ENCODE measurements at regions of chr17 and their contacts with region 1.

Region 1: DNA sequence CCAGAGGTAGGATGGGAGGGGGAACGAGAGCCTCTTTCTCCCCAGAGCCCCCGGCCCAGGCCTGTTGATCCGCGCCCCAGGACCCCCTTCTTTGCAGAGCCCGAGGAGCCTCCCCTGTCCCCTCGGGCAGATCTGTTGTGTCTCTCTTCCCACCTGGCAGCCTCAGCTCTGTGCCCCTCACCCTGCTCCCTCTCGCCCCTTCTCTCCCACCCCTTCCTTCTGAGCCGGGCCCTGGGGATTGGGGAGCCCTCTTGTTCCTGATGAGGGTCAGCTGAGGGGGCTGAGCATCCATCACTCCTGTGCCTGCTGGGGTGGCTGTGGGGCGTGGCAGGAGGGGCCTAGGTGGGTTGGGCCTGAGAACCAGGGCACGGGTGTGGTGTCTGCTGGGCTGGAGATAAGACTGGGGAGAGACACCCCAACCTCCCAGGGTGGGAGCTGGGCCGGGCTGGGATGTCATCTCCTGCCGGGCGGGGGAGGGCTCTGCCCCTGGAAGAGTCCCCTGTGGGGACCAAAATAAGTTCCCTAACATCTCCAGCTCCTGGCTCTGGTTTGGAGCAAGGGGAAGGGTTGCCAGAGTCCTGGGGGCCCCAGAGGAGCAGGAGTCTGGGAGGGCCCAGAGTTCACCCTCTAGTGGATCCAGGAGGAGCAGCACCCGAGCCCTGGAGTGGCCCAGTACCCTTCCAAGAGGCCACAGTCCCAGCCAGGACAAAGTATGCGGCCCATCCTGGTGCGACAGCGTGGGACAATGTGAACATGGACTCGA is 65.4 kb downstream of the MRC2 start:
- DNase-seq: no peak
- H3K4me3 ChIP-seq: no peak overlapping the region
- CTCF ChIP-seq: peak; percentile 59

Region 2: DNA sequence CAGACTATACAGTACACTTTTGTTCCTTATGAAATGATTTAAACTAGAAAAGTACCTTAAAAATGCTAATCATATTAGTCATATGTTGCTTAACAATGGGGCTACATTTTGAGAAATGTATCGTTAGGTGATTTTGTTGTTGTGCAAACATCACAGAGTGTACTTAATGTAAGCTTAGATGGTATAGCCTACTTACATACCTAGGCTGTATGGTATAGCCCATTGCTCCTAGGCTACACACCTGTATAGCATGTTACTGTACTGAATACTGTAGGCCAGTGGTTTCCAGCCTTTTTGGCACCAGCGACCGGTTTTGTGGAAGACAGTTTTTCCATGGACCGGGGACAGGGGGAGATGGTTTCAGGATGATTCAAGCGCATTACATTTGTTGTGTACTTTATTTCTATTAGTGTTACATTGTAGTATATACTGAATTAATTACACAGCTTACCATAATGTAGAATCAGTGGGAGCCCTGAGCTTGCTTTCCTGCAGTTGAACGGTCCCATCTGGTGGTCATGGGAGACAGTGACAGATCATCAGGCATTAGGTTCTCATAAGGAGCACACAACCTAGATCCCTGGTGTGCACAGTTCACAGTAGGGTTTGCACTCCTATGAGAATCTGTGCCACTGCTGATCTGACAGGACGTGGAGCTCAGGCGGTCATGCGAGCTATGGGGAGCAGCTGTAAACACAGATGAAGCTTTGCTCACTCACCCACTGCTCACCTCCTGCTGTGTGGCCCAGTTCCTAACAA is 100.4 kb before region 1 on chr17:
- in situ Hi-C with region 1: no loop called
- DNase-seq: no peak
- H3K4me3 ChIP-seq: no peak overlapping the region
- CTCF ChIP-seq: peak; percentile 11

Region 3: GRCh38 chr17:62617125-62617893 is 75.6 kb before region 1 on chr17:
- in situ Hi-C with region 1: loop called (anchors 5 kb)
- DNase-seq: no peak
- H3K4me3 ChIP-seq: no peak overlapping the region
- CTCF ChIP-seq: no peak